K562 (cell line): ENCODE measurements at regions of chr2 and their contacts with region 1.

Region 1: GRCh38 chr2:26840937-26841613 is 6.9 kb upstream of the DPYSL5 start:
- DNase-seq: peak in 2 of 4 experiments; percentile 35 to 38
- ATAC-seq: peak; percentile 94
- H3K4me3 ChIP-seq: no peak overlapping the region
- H3K27ac ChIP-seq: no peak overlapping the region
- H3K4me1 ChIP-seq: no peaks in the 10 kb centered on the region
- H3K27me3 ChIP-seq: peaks cover 29 to 34% of the 10 kb centered on the region in 2 experiments
- CTCF ChIP-seq: peak; percentile 35 to 49 (median 45); a peak in 5 of 6 replicates
- EP300 ChIP-seq: no peak
- POLR2A ChIP-seq: no peak
- RAD21 ChIP-seq: peak in 1 of 2 experiments; percentile 53; a peak in 2 of 4 replicates

Region 2: GRCh38 chr2:26605195-26605998 is 235.7 kb before region 1 on chr2:
- CTCF ChIA-PET with region 1: no interaction called
- POLR2A ChIA-PET with region 1: no interaction called
- in situ Hi-C with region 1: no loop called
- intact Hi-C with region 1: loop called (anchors 5 kb)
- DNase-seq: peak; percentile 60 to 70 (median 69)
- ATAC-seq: peak; percentile 85
- H3K4me3 ChIP-seq: no peak overlapping the region
- H3K27ac ChIP-seq: no peak overlapping the region
- H3K4me1 ChIP-seq: no peaks in the 10 kb centered on the region
- H3K27me3 ChIP-seq: peaks cover 7 to 39% of the 10 kb centered on the region in 2 experiments; a peak in 4 of 5 replicates
- CTCF ChIP-seq: peak; percentile 79 to 90 (median 89)
- EP300 ChIP-seq: no peak
- POLR2A ChIP-seq: no peak
- RAD21 ChIP-seq: peak; percentile 94 to 95

Region 3: DNA sequence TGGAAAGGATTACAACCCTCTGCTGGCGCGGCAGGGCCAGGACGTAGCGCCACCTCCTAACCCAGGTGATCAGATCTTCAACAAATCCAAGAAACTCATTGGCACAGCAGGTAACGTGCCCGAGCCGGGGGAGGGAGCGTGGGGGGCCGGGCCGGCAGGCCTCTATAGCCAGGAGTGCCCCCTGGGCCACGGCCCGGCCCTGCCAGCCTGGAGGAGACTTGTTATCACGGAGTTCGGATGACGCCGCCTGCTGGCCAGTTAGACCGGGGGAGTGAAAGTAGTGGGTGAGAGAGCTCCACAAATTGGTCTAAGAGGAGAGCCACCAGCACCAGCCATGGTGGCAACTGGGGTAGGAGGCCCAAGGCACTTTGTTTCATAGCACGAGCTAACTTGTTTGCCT is 183.1 kb after region 1 on chr2:
- CTCF ChIA-PET with region 1: no interaction called
- POLR2A ChIA-PET with region 1: no interaction called
- in situ Hi-C with region 1: loop called (anchors 5 kb)
- intact Hi-C with region 1: no loop called
- DNase-seq: no peak
- ATAC-seq: no peak
- H3K4me3 ChIP-seq: no peak overlapping the region
- H3K27ac ChIP-seq: no peak overlapping the region
- H3K4me1 ChIP-seq: peaks cover 28 to 50% of the 10 kb centered on the region in 2 experiments
- H3K27me3 ChIP-seq: no peaks in the 10 kb centered on the region
- CTCF ChIP-seq: peak in 2 of 3 experiments; percentile 19 to 32; a peak in 1 of 6 replicates
- EP300 ChIP-seq: no peak
- POLR2A ChIP-seq: no peak
- RAD21 ChIP-seq: no peak